HEK293 (cell line): ENCODE measurements at regions of chr7 and their contacts with region 1.

Region 1: DNA sequence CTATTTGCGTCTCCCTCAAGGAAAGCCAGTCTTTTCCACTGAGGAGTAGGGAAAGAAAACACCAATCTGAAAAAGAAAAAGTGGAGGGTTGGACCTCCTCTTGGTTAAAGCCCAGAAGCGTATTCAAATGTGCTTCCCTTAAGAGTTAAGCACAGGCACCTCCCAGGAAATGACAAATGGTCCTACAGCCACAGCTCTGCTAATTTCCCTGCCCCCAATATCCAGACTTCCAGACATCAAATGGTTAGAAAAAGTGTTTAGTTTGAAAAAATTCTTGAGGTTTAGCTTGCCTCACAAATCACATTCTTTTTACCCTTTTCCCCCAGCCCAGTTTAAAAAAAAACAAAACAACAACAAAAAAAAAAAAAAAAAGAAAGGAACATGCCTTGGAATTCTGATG is 19.0 kb upstream of the COL1A2 start:
- H3K4me3 ChIP-seq: no peak overlapping the region
- H3K27ac ChIP-seq: no peak overlapping the region
- H3K4me1 ChIP-seq: no peaks in the 10 kb centered on the region
- CTCF ChIP-seq: no peak

Region 2: GRCh38 chr7:94360926-94361325 is 14.8 kb before region 1 on chr7:
- CTCF ChIA-PET with region 1: interaction called, 11 read pairs
- POLR2A ChIA-PET with region 1: interaction called, 4 read pairs
- H3K4me3 ChIP-seq: no peak overlapping the region
- H3K27ac ChIP-seq: no peak overlapping the region
- H3K4me1 ChIP-seq: no peaks in the 10 kb centered on the region
- CTCF ChIP-seq: no peak

Region 3: GRCh38 chr7:94423863-94424735 is 48.4 kb after region 1 on chr7:
- CTCF ChIA-PET with region 1: no interaction called
- POLR2A ChIA-PET with region 1: no interaction called
- H3K4me3 ChIP-seq: no peak overlapping the region
- H3K27ac ChIP-seq: no peak overlapping the region
- H3K4me1 ChIP-seq: no peaks in the 10 kb centered on the region
- CTCF ChIP-seq: no peak